ENCODE measurements at regions of chr7 and their contacts with region 1.

Region 1: GRCh38 chr7:95608359-95609173 is 12.2 kb upstream of the PDK4 start:
- DNase-seq: peak; percentile 94

Region 2: GRCh38 chr7:95596198-95597063 is 12.1 kb before region 1 on chr7 and contains the start of gene PDK4:
- intact Hi-C with region 1: loop called (anchors 1 kb)
- DNase-seq: peak; percentile 96
- total RNA-seq, gene PDK4: 49.0 TPM

Measured in cardiac septum (tissue), 1 donor.